ENCODE measurements at regions of chr17 and their contacts with region 1.

Region 1: DNA sequence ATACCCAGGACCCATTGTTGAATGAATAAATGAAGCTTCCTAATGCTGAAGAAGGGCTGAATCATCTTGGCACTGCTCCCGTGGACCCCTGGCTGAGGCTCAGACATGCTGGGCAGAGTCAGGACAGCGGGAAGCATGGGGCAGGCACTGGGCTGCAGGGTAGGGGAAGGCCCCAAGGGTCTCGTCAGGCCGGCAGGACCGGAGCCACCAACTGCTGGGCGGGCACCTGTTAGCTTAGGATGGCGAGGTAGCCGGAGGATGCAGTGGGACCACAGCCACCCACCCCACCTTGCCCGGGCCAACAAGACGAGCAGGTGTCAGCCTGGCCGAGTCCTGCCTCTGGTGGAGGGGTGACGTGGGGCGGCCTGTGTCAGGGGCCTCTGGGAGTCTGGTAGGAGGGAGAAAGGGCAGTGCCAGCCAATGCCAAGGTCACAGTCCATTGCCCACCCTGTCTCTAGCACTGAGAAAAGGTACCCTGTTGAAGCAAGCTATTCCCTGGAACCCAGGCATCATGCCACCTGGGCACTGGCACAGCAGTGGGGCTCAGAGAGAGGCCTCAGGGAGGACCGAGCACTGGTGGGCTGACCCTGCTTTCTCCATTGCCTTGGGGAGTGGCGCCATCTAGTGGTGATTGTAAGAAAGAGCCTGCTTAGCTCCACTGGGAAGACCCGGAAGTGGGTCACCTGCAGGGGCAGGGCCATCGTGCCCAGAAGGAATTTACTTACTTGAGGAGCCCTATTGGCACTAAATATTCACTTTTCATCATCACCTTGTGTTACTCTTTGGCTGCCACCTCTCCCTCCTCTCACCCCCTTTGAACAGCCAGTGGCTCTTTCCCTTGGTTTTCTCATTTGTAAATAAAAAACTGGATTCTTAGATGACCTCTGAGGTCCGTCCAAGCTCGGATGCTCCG is 3.0 kb upstream of the DLX3 start:
- DNase-seq: peak; percentile 76
- H3K4me3 Mint-ChIP-seq: no peak overlapping the region
- H3K27ac Mint-ChIP-seq: no peak overlapping the region
- H3K4me1 Mint-ChIP-seq: peaks cover 16% of the 10 kb centered on the region
- H3K27me3 Mint-ChIP-seq: peaks cover 60% of the 10 kb centered on the region

Region 2: GRCh38 chr17:49496183-49496866 is 501.7 kb before region 1 on chr17:
- intact Hi-C with region 1: loop called (anchors 10 kb)
- DNase-seq: peak; percentile 77
- H3K4me3 Mint-ChIP-seq: peak overlapping the region; percentile 66
- H3K27ac Mint-ChIP-seq: no peak overlapping the region
- H3K4me1 Mint-ChIP-seq: no peaks in the 10 kb centered on the region
- H3K27me3 Mint-ChIP-seq: peaks cover 75% of the 10 kb centered on the region

Region 3: GRCh38 chr17:49861150-49861892 is 136.7 kb before region 1 on chr17:
- intact Hi-C with region 1: loop called (anchors 1 kb)
- DNase-seq: peak; percentile 20
- H3K4me3 Mint-ChIP-seq: no peak overlapping the region
- H3K27ac Mint-ChIP-seq: no peak overlapping the region
- H3K4me1 Mint-ChIP-seq: peaks cover 6% of the 10 kb centered on the region
- H3K27me3 Mint-ChIP-seq: peaks cover 2% of the 10 kb centered on the region

Region 4: GRCh38 chr17:49880291-49881053 is 117.6 kb before region 1 on chr17:
- intact Hi-C with region 1: loop called (anchors 1 kb)
- DNase-seq: peak; percentile 61
- H3K4me3 Mint-ChIP-seq: no peak overlapping the region
- H3K27ac Mint-ChIP-seq: no peak overlapping the region
- H3K4me1 Mint-ChIP-seq: peaks cover 7% of the 10 kb centered on the region
- H3K27me3 Mint-ChIP-seq: peaks cover 36% of the 10 kb centered on the region

Region 5: DNA sequence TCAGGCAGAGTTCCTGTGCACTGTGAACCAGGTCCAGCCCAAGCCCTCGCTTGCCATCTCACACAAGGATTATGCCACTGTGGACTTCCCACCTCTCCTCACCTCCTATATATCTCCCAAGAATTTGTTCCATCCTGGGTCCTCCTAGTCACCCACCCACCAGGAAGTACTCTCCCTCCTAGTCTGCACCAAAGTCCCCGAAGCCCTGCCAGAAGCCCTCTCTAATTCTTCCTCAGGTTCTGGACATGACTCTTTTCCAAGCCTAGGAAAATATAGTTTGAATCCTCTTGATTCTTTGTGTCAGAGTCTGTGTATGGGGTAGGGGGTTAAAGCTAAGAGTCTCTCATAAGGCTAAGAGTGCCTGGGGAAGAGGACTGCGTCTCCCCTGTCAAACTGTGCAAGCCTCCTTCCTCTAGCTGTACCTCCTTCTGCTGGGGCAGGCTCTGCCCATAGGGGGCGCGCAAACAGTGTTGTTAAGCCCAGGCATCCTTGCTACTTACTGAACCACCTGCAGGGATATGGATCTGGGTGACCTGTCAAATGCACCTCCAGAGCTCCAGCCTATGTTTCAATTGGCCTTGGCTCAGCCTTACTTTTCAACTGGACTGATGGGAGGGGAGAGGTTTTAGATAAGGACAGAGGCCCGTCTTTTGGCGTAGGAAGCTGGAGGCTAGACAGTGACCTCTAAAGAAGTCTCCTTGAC is 45.7 kb before region 1 on chr17:
- intact Hi-C with region 1: loop called (anchors 1 kb)
- DNase-seq: peak; percentile 66
- H3K4me3 Mint-ChIP-seq: no peak overlapping the region
- H3K27ac Mint-ChIP-seq: no peak overlapping the region
- H3K4me1 Mint-ChIP-seq: no peaks in the 10 kb centered on the region
- H3K27me3 Mint-ChIP-seq: peaks cover 13% of the 10 kb centered on the region

Region 6: GRCh38 chr17:49968380-49969133 is 29.5 kb before region 1 on chr17:
- intact Hi-C with region 1: loop called (anchors 1 kb)
- DNase-seq: peak; percentile 47
- H3K4me3 Mint-ChIP-seq: peak overlapping the region; percentile 85
- H3K27ac Mint-ChIP-seq: peak overlapping the region; percentile 63
- H3K4me1 Mint-ChIP-seq: peaks cover 21% of the 10 kb centered on the region
- H3K27me3 Mint-ChIP-seq: peaks cover 90% of the 10 kb centered on the region

Region 7: DNA sequence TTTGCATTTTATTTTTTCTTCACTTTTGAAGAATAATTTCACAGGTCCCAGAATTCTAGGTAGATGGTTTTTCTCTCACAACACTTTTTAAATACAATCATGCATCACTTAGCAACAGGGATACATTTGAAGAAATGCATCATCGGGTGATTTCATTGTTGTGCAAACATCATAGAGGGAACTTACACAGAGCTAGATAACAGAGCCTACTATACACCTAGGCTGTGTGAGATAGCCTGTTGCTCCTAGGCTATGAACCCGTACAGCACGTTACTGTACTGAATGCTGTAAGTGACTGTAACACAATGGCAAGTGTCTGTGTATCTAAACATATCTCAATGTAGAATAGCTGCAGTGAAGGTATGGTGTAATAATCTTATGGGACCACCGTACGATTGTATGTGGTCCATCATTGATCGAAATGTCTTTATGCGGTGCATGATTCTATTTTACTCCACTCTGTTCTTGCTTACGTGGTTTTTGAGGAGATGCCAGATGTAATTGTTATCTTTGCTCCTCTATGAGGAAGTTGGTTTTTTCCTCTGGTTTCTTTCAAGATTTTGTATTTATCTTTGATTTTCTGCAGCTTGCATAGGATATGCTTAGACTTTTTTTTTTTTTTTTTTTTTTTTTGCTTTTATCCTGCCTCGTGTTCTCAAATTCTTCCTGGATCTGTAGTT is 240.7 kb after region 1 on chr17:
- intact Hi-C with region 1: no loop called
- DNase-seq: no peak
- H3K4me3 Mint-ChIP-seq: no peak overlapping the region
- H3K27ac Mint-ChIP-seq: no peak overlapping the region
- H3K4me1 Mint-ChIP-seq: no peaks in the 10 kb centered on the region
- H3K27me3 Mint-ChIP-seq: peaks cover 43% of the 10 kb centered on the region